ENCODE measurements at regions of chr17 and their contacts with region 1.

Region 1: GRCh38 chr17:81833160-81833920 is at the start of gene MCRIP1:
- DNase-seq: peak; percentile 87 to 100 (median 91)
- ATAC-seq: peak; percentile 84
- H3K4me3 ChIP-seq: peak within 1 kb of the TSS; percentile 82
- H3K4me3 Mint-ChIP-seq: peak within 1 kb of the TSS; percentile 75 to 96 (median 92)
- H3K27ac ChIP-seq: peak within 1 kb of the TSS; percentile 91
- H3K27ac Mint-ChIP-seq: peak within 1 kb of the TSS; percentile 81 to 97 (median 91)
- H3K4me1 ChIP-seq: peaks cover 13 to 16% of the 10 kb centered on the region in 2 donors
- H3K4me1 Mint-ChIP-seq: peaks cover 11 to 27% (median 19%) of the 10 kb centered on the region in 7 donors
- H3K27me3 ChIP-seq: no peaks in the 10 kb centered on the region
- H3K27me3 Mint-ChIP-seq: no peaks in the 10 kb centered on the region
- total RNA-seq, gene MCRIP1: 41.1 to 65.3 (median 53.1) TPM

Region 2: DNA sequence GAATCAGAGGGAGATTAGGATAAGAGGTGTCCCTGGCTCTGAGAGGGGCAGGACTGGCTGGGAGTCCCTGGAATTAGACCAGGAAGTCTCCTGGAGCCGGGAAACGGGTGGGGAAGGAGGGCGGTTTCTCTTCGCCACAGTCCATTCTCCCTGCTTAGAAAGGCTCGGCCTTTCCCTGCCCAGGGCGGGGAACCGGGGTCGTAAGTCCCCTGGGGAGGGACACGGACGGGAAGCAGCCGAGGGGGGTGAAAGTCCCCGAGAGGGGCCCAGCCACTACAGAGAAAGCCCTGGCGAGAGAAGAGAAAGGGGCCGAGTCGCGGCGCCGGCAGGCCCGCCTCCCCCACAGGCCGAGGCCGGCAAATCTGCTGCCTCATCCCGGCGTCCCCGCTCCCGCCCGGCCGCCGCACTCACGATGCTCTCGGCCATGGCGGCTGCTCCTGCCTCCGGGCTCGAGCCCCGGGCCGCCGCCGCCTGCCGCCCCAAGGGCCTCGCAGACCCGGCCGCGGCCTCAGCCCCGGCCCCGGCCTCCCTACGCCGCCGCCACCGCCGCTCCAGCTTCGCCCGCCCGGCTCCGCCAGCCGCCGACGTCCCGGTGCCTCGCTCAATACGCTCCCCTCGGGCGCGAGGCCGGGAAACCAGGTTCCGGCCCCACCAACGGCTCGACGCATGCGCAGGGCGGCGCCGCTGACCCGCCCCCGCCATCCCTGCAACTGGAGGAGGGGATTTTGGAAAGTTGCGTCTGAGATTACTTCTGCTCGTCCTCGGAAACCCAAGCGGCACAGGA is 196.6 kb before region 1 on chr17 and contains the starts of genes NPLOC4 and TSPAN10:
- CTCF ChIA-PET with region 1: no interaction called
- POLR2A ChIA-PET with region 1: no interaction called
- intact Hi-C with region 1: loop called in 1 of 2 experiments (anchors 2 kb)
- DNase-seq: peak; percentile 62 to 94 (median 80)
- ATAC-seq: peak; percentile 95
- H3K4me3 ChIP-seq: peak within 1 kb of the TSS; percentile 86
- H3K4me3 Mint-ChIP-seq: peak within 1 kb of the TSS; percentile 91 to 98 (median 95)
- H3K27ac ChIP-seq: peak within 1 kb of the TSS; percentile 87
- H3K27ac Mint-ChIP-seq: peak within 1 kb of the TSS; percentile 25 to 94 (median 89)
- H3K4me1 ChIP-seq: peaks cover 10 to 12% of the 10 kb centered on the region in 2 donors
- H3K4me1 Mint-ChIP-seq: peaks cover 13 to 37% (median 26%) of the 10 kb centered on the region in 7 donors
- H3K27me3 ChIP-seq: no peaks in the 10 kb centered on the region
- H3K27me3 Mint-ChIP-seq: no peaks in the 10 kb centered on the region
- total RNA-seq, gene NPLOC4: 77.7 to 125 (median 93.6) TPM
- total RNA-seq, gene TSPAN10: 0.32 to 1.9 (median 0.51) TPM

Region 3: DNA sequence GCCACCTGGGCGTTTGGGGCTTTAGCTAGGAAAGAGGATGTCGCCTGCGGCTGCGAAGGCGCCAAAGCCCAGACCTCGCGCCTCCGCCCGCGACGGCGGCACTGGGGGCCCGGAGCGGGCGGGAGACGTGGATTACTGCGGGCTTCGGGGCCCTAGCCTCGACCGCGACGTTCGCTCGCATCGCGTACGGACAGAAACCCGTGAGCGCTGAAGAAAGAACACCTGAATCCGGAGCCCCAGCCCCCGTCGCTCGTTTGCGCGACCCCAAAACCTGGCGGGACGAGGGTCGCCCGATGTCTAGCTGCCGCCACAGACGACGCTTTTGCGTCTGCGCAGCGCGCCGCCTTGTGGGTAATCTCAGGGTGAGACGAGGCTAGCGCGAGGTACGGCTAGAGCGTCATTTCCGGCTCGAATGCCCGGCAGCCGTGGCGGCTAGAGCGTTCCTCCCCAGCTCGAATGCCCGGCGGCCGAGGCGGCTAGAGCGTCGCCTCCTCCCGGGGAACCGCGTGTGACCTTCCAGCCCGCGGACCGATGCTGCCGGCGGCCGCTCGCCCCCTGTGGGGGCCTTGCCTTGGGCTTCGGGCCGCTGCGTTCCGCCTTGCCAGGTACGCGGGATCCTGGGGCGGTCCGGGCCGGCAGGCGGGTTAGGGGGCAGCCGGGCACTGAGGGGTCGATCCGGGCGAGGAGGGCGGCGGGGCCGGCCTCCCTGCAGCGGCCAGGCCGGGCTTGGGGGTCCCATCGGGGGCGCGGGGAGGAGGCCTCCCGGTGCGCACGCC is 130.2 kb before region 1 on chr17 and contains the start of gene MRPL12:
- CTCF ChIA-PET with region 1: interaction called, 3 read pairs
- POLR2A ChIA-PET with region 1: interaction called, 5 read pairs
- intact Hi-C with region 1: loop called (anchors 1 to 2 kb)
- DNase-seq: peak; percentile 75 to 87 (median 84)
- ATAC-seq: peak; percentile 96
- H3K4me3 ChIP-seq: peak within 1 kb of the TSS; percentile 91
- H3K4me3 Mint-ChIP-seq: peak within 1 kb of the TSS; percentile 83 to 94 (median 90)
- H3K27ac ChIP-seq: peak within 1 kb of the TSS; percentile 95
- H3K27ac Mint-ChIP-seq: peak within 1 kb of the TSS; percentile 84 to 96 (median 92)
- H3K4me1 ChIP-seq: peaks cover 23 to 24% of the 10 kb centered on the region in 2 donors
- H3K4me1 Mint-ChIP-seq: peaks cover 21 to 38% (median 26%) of the 10 kb centered on the region in 7 donors
- H3K27me3 ChIP-seq: no peaks in the 10 kb centered on the region
- H3K27me3 Mint-ChIP-seq: no peaks in the 10 kb centered on the region
- total RNA-seq, gene MRPL12: 21.3 to 83.8 (median 26.6) TPM

Region 4: DNA sequence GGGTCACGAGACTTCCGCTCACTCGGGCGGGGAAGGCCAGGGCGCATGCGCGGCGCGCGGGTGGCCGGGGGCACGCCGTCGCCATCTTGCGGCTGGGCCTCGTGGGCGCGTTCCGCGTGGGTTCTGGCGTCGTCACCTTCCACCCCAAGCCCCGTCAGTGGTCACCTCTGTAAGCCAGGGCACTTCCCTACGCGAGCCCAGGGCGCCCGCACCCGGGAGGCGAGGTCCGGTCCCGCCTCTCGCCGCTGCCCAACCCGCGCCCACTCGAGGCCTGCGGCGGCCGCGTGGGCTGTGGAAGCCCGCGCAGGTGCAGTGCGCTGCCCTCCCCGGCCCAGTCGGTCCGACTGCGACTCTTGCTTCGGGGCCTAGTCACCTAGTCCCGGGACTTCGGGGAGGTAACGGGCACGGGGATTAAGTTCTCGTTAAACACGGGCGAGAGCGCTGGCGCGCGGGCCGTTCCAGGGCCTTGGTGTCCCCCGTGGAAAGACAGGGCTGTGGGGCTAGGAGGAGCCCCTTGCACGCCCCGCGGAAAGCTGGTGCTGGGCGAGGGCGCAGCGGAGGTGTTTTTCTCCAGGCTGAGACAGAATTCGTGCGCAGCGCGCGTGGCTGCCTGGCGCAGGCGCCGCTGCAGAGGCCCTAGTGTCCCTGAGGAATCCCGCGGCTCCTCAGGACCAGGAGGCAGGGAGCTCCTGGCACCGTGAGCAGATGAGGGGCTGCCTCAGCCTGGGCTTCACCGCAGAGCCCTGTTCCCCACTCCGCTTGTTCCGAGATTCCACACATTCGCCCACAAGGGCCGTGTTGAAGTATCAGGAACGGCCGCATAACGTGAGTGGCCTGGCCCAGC is 38.3 kb after region 1 on chr17:
- CTCF ChIA-PET with region 1: no interaction called
- POLR2A ChIA-PET with region 1: interaction called, 8 read pairs
- intact Hi-C with region 1: loop called in 1 of 2 experiments (anchors 1 kb)
- DNase-seq: peak; percentile 93 to 99 (median 97)
- ATAC-seq: peak; percentile 45
- H3K4me3 ChIP-seq: peak overlapping the region; percentile 93
- H3K4me3 Mint-ChIP-seq: peak overlapping the region; percentile 82 to 91 (median 86)
- H3K27ac ChIP-seq: peak overlapping the region; percentile 98
- H3K27ac Mint-ChIP-seq: peak overlapping the region; percentile 88 to 97 (median 95)
- H3K4me1 ChIP-seq: peaks cover 25 to 28% of the 10 kb centered on the region in 2 donors
- H3K4me1 Mint-ChIP-seq: peaks cover 11 to 43% (median 41%) of the 10 kb centered on the region in 7 donors
- H3K27me3 ChIP-seq: no peaks in the 10 kb centered on the region
- H3K27me3 Mint-ChIP-seq: no peaks in the 10 kb centered on the region

Region 5: GRCh38 chr17:81890447-81891299 is 57.3 kb after region 1 on chr17:
- CTCF ChIA-PET with region 1: no interaction called
- POLR2A ChIA-PET with region 1: no interaction called
- intact Hi-C with region 1: loop called in 1 of 2 experiments (anchors 5 kb)
- DNase-seq: peak in 1 of 9 donors; percentile 47
- ATAC-seq: no peak
- H3K4me3 ChIP-seq: peak overlapping the region; percentile 79
- H3K4me3 Mint-ChIP-seq: peak overlapping the region; percentile 78 to 96 (median 87)
- H3K27ac ChIP-seq: peak overlapping the region; percentile 82
- H3K27ac Mint-ChIP-seq: peak overlapping the region; percentile 84 to 97 (median 95)
- H3K4me1 ChIP-seq: peaks cover 16 to 20% of the 10 kb centered on the region in 2 donors
- H3K4me1 Mint-ChIP-seq: peaks cover 0 to 32% (median 19%) of the 10 kb centered on the region in 7 donors
- H3K27me3 ChIP-seq: no peaks in the 10 kb centered on the region
- H3K27me3 Mint-ChIP-seq: no peaks in the 10 kb centered on the region

Region 6: GRCh38 chr17:82170412-82170961 is 337.1 kb after region 1 on chr17:
- CTCF ChIA-PET with region 1: no interaction called
- POLR2A ChIA-PET with region 1: no interaction called
- intact Hi-C with region 1: no loop called
- DNase-seq: no peak
- ATAC-seq: peak; percentile 65
- H3K4me3 ChIP-seq: no peak overlapping the region
- H3K4me3 Mint-ChIP-seq: no peak overlapping the region
- H3K27ac ChIP-seq: no peak overlapping the region
- H3K27ac Mint-ChIP-seq: no peak overlapping the region
- H3K4me1 ChIP-seq: no peaks in the 10 kb centered on the region
- H3K4me1 Mint-ChIP-seq: peaks cover 0 to 18% (median 6%) of the 10 kb centered on the region in 7 donors
- H3K27me3 ChIP-seq: no peaks in the 10 kb centered on the region
- H3K27me3 Mint-ChIP-seq: no peaks in the 10 kb centered on the region